ENCODE measurements at regions of chr1 and their contacts with region 1.

Region 1: DNA sequence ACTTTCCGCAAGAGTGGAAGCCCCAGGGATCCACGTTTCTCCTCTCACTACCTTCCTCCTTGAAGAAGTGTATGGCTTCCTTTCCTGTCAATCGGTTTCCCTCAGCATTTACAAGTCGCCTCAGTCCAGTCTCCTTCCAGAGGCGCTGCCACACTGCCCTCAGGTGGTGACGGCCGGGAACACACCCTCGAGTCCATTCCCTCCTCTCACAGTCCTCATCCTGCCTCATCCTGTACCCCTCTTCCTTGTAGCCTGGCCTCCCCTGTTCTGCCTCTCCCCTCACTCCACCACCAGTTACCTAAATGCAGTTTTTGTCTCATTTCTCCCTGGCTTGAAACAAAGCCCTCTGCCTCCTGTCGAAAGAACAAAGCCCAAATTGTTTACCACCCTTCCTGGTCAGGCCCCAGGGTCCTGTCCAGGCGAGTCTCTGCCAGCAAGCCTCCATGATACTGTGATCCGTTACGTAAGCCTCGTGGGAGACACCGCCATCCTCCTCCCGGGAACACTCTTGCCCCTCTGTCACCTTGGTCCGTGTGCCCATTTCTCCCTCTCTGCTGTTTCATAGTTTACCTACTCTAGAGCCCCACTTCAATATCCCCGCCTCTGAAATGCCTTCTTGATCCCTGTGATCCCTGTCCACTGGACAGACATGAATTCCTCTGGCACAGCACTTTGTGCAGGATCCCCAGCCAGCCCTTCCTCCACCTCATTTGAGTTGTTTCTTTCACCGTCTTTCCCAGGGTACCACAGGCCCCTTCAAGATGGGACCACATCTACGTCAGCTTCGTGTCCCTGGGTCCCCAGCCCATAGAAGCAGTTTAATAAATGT is 23.3 kb upstream of the LSM10 start:
- DNase-seq: peak; percentile 82 to 93
- H3K4me3 ChIP-seq: no peak overlapping the region
- H3K27ac ChIP-seq: no peak overlapping the region
- H3K4me1 ChIP-seq: peaks cover 0 to 5% (median 2%) of the 10 kb centered on the region in 4 donors
- H3K27me3 ChIP-seq: no peaks in the 10 kb centered on the region
- CTCF ChIP-seq: peak; percentile 92 to 93

Region 2: DNA sequence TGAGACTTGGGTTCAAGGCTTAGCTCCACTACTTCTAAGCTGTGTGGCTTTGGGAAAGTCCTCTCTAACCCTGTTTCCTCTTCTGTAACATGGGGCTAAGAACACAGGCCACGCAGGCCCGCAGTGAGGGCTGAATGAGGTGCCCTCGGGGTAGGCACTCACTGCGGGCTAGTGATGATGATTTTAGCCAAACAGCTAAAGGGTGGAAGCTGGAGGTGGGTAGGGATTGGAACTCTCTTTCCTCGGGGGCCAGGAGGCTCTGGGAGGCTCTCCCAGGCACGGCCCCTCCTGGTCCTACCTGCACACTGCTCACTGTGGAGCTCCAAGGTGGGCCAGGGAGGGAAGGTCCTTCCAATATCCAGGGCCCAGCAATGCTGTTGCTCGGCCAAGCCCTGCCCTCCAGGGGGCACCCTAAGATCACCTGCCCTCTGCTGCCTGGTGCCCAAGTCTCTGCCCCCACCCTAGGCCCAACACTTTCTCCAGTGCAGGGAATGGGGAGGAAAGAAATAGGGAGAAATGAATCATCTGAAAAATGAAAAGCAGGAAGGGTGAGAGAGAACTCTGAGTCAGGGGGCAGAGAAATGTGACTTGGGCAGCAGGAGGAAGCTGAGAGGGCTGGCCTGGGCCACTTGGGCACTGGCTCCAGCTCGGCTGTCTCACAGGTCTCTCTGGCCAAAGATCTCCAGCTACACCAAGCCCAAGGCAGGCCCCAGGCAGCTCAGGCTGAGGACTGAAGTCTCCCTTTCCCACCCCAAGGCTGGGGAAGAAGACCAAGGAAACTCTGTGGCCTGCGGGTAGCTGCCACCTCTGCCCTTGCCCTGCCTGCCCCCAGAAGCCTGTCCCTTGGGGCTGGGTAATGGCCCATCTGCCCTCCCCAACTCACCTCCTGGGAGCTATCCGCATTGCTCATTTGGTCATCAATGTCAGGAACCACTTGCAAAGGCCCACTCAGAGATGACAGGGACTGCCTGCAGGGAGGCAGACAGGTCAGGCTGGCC is 78.3 kb before region 1 on chr1:
- intact Hi-C with region 1: loop called (anchors 2 kb)
- DNase-seq: peak; percentile 48 to 82
- H3K4me3 ChIP-seq: no peak overlapping the region
- H3K27ac ChIP-seq: peak overlapping the region; percentile 76 to 78
- H3K4me1 ChIP-seq: peaks cover 3 to 22% (median 11%) of the 10 kb centered on the region in 4 donors
- H3K27me3 ChIP-seq: no peaks in the 10 kb centered on the region
- CTCF ChIP-seq: peak; percentile 69 to 74

Measured in tibial artery (tissue), 4 donors.